Activated CD8-positive, alpha-beta T cell treated with anti-CD3 and anti-CD28 coated beads for 36 hours (primary cell): ENCODE measurements at regions of chr4 and their contacts with region 1.

Region 1: DNA sequence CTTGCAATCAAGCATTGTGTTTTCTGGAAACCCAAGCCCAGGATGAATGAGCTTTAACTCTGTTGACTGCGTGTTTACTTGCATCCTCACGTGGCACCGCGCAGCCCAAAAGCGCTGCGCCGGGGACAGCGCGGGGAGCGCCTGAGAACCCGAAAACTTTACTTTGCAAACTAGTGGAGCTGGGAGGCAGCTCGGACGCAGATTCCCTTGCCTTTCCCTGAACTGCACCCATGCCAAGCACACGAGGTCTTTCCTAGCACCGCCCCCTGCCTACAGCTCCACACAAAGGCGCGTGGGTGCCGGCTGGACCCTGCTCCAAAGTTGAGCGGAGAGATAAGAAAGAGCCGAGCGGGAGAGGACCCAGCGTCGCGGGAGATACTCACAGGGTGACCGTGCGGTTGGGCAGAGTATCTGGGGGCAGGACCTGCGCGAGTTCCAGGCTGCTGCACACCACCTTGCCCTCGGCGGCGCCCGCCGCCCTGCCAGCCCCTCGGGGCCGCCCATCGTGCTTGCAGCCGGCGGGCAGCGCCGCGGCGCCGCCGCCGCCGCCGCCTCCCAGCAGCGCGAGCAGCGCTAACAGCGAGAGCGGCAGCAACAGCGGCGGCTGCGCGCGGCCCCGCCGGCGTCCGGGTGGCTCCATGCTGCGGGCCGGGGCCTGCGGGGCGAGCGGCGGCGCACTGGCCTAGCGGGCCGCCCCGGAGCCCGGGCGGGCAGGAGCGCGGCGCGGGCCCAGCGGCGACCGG is 550 bp downstream of the ADGRA3 start:
- DNase-seq: peak; percentile 48
- ATAC-seq: peak; percentile 62
- H3K4me3 Mint-ChIP-seq: peak overlapping the region; percentile 97
- H3K27ac Mint-ChIP-seq: peak overlapping the region; percentile 91
- H3K4me1 Mint-ChIP-seq: peaks cover 16% of the 10 kb centered on the region
- H3K27me3 Mint-ChIP-seq: peaks cover 9% of the 10 kb centered on the region
- CTCF ChIP-seq: no peak

Region 2: DNA sequence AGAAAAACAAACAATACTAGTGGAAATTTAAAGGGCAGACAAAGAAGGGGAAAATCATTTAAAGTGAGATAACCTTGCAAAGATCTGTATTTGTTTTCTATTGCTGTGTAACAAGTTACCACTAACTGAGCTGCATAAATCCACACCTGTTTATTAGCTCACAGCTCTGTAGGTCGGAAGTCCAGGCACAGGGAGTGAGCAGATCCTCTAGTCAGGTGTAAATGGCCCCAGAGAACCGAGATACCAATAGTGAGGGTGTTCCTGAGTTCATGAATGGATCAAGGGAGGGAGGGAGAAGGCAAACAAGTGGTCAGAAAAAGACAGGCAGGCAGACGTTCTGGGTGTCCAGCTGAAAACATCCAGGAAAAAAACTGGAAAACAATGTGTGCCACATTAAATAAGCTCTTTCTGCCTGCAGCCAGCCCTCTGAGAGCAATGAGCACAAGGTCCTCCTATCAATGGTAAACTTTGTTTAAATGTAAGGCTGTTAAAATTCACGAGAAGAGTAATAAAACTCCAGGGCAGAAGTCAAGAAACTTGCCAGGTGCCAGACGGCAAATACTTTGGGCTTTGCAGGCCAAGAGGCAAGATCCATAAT is 24.5 kb before region 1 on chr4:
- CTCF ChIA-PET with region 1: no interaction called
- POLR2A ChIA-PET with region 1: no interaction called
- intact Hi-C with region 1: no loop called
- DNase-seq: no peak
- ATAC-seq: no peak
- H3K4me3 Mint-ChIP-seq: no peak overlapping the region
- H3K27ac Mint-ChIP-seq: no peak overlapping the region
- H3K4me1 Mint-ChIP-seq: peaks cover 2% of the 10 kb centered on the region
- H3K27me3 Mint-ChIP-seq: no peaks in the 10 kb centered on the region
- CTCF ChIP-seq: no peak

Region 3: GRCh38 chr4:22500831-22501719 is 14.2 kb before region 1 on chr4:
- CTCF ChIA-PET with region 1: no interaction called
- POLR2A ChIA-PET with region 1: interaction called, 8 read pairs
- intact Hi-C with region 1: loop called (anchors 2 kb)
- DNase-seq: peak; percentile 72
- ATAC-seq: peak; percentile 93
- H3K4me3 Mint-ChIP-seq: peak overlapping the region; percentile 48
- H3K27ac Mint-ChIP-seq: no peak overlapping the region
- H3K4me1 Mint-ChIP-seq: peaks cover 22% of the 10 kb centered on the region
- H3K27me3 Mint-ChIP-seq: no peaks in the 10 kb centered on the region
- CTCF ChIP-seq: no peak

Region 4: DNA sequence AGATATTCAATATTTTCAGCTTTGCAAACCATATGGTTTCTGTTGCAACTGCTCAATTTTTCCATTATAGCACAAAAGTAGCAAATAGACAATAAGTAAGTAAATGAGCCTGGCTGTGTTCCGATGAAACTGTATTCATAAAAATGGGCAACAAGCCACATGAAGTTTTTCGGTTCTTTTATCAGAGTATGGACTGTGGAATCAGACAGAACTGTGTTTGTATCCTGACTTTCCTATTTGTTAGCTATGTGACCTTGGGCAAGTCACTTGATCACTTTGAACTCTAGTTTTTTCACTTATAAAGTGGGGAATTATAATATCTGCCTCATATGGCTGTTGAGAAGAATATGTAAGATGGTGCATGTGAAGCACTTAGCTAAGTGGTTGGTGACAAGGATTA is 23.9 kb after region 1 on chr4:
- CTCF ChIA-PET with region 1: no interaction called
- POLR2A ChIA-PET with region 1: no interaction called
- intact Hi-C with region 1: no loop called
- DNase-seq: no peak
- ATAC-seq: no peak
- H3K4me3 Mint-ChIP-seq: no peak overlapping the region
- H3K27ac Mint-ChIP-seq: no peak overlapping the region
- H3K4me1 Mint-ChIP-seq: no peaks in the 10 kb centered on the region
- H3K27me3 Mint-ChIP-seq: no peaks in the 10 kb centered on the region
- CTCF ChIP-seq: no peak